K562 (cell line): ENCODE measurements at regions of chr7 and their contacts with region 1.

Region 1: GRCh38 chr7:106542550-106543220 is 118.3 kb downstream of the CCDC71L start:
- DNase-seq: peak; percentile 77 to 96 (median 84)
- ATAC-seq: peak; percentile 96
- H3K4me3 ChIP-seq: no peak overlapping the region
- H3K27ac ChIP-seq: peak overlapping the region; percentile 30
- H3K4me1 ChIP-seq: peaks cover 0 to 22% of the 10 kb centered on the region in 2 experiments; a peak in 2 of 5 replicates
- H3K27me3 ChIP-seq: no peaks in the 10 kb centered on the region
- CTCF ChIP-seq: peak; percentile 95 to 98 (median 98)
- EP300 ChIP-seq: peak; percentile 63
- POLR2A ChIP-seq: no peak
- RAD21 ChIP-seq: peak; percentile 100

Region 2: GRCh38 chr7:106588422-106589198 is 45.9 kb after region 1 on chr7:
- CTCF ChIA-PET with region 1: no interaction called
- POLR2A ChIA-PET with region 1: no interaction called
- in situ Hi-C with region 1: no loop called
- intact Hi-C with region 1: loop called (anchors 5 kb)
- DNase-seq: peak in 3 of 4 experiments; percentile 45 to 67 (median 54)
- ATAC-seq: peak; percentile 63
- H3K4me3 ChIP-seq: no peak overlapping the region
- H3K27ac ChIP-seq: peak overlapping the region; percentile 15; the same call in 1 of the 3 replicates
- H3K4me1 ChIP-seq: peaks cover 11 to 62% of the 10 kb centered on the region in 2 experiments
- H3K27me3 ChIP-seq: no peaks in the 10 kb centered on the region
- CTCF ChIP-seq: no peak
- EP300 ChIP-seq: peak; percentile 16; the same call in 1 of the 2 replicates
- POLR2A ChIP-seq: no peak
- RAD21 ChIP-seq: no peak

Region 3: DNA sequence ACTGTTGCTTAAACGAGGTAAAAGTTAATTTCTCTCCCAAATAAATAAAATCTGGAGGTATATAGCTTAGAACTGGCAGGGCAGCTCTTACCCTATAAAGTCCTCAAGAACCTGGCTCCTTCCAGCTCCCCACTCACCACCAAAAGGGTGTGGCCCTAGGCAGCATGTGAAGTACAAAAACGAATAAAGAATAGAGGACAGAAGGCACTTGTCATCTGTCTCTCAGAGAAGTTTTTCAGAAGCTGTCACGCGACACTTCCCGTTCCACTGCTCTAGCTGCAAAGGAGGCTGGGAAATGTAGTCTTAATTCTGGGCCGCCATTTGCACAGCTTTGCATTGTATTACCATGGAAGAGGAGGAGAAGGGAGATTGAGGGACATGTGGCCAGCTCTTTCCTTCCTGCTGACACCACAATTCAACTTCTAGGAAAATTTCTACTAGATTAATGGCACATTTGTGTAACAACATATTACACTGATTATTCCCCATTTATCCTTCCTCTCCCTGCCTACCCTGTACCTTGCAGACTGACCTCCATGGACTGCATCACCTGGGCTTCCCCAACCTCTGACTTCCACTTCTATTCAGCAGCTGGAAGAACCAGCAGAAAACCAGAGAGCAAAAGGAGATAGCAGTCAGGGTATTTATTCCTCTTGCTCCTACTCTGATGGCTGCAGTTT is 56.1 kb after region 1 on chr7:
- CTCF ChIA-PET with region 1: no interaction called
- POLR2A ChIA-PET with region 1: no interaction called
- in situ Hi-C with region 1: no loop called
- intact Hi-C with region 1: loop called (anchors 2 kb)
- DNase-seq: peak; percentile 83 to 97 (median 87)
- ATAC-seq: peak; percentile 97
- H3K4me3 ChIP-seq: no peak overlapping the region
- H3K27ac ChIP-seq: peak overlapping the region; percentile 62
- H3K4me1 ChIP-seq: peaks cover 19 to 56% of the 10 kb centered on the region in 2 experiments
- H3K27me3 ChIP-seq: no peaks in the 10 kb centered on the region
- CTCF ChIP-seq: no peak
- EP300 ChIP-seq: peak; percentile 55; the same call in 1 of the 2 replicates
- POLR2A ChIP-seq: no peak
- RAD21 ChIP-seq: no peak

Region 4: DNA sequence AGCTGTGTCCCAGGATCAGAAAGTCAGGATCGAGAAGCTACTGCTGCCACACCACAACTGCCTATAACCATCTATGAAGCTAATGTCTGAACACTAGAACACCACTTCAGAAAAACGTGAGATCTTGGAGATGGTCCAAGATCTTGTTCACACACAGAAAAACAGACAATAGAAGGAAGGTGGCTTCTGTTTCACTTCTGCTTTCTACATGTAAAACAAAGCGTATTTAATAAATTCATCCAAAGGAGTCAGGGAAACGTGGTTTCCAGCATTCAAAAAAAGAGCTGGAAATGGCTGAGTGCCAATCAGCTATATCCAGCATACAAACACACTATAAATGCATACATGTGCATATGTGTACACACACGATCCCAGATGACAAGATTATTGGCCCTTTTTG is 188.5 kb after region 1 on chr7:
- CTCF ChIA-PET with region 1: interaction called, 34 read pairs
- POLR2A ChIA-PET with region 1: interaction called, 6 read pairs
- in situ Hi-C with region 1: loop called (anchors 5 kb)
- intact Hi-C with region 1: loop called (anchors 1 kb)
- DNase-seq: no peak
- ATAC-seq: no peak; the same call in 2 of the 3 replicates
- H3K4me3 ChIP-seq: no peak overlapping the region
- H3K27ac ChIP-seq: no peak overlapping the region
- H3K4me1 ChIP-seq: peaks cover 0 to 23% of the 10 kb centered on the region in 2 experiments; a peak in 3 of 5 replicates
- H3K27me3 ChIP-seq: no peaks in the 10 kb centered on the region
- CTCF ChIP-seq: no peak
- EP300 ChIP-seq: no peak
- POLR2A ChIP-seq: no peak
- RAD21 ChIP-seq: no peak